ENCODE measurements at regions of chr10 and their contacts with region 1.

Region 1: GRCh38 chr10:44010873-44011602 is 362.4 kb upstream of the ZNF32 start:
- DNase-seq: no peak
- H3K4me3 ChIP-seq: no peak overlapping the region
- H3K4me3 Mint-ChIP-seq: no peak overlapping the region
- H3K27ac Mint-ChIP-seq: no peak overlapping the region
- H3K4me1 ChIP-seq: no peaks in the 10 kb centered on the region
- H3K4me1 Mint-ChIP-seq: peaks cover 6% of the 10 kb centered on the region
- H3K27me3 ChIP-seq: no peaks in the 10 kb centered on the region; the same call in 1 of the 2 replicates
- H3K27me3 Mint-ChIP-seq: peaks cover 18% of the 10 kb centered on the region
- CTCF ChIP-seq: no peak

Region 2: GRCh38 chr10:43846187-43846680 is 164.8 kb before region 1 on chr10:
- CTCF ChIA-PET with region 1: no interaction called
- POLR2A ChIA-PET with region 1: no interaction called
- intact Hi-C with region 1: loop called (anchors 10 kb)
- DNase-seq: no peak
- H3K4me3 ChIP-seq: no peak overlapping the region
- H3K4me3 Mint-ChIP-seq: no peak overlapping the region
- H3K27ac Mint-ChIP-seq: no peak overlapping the region
- H3K4me1 ChIP-seq: no peaks in the 10 kb centered on the region
- H3K4me1 Mint-ChIP-seq: peaks cover 6% of the 10 kb centered on the region
- H3K27me3 ChIP-seq: no peaks in the 10 kb centered on the region
- H3K27me3 Mint-ChIP-seq: peaks cover 17% of the 10 kb centered on the region
- CTCF ChIP-seq: peak in 1 of 2 experiments; percentile 0

Region 3: DNA sequence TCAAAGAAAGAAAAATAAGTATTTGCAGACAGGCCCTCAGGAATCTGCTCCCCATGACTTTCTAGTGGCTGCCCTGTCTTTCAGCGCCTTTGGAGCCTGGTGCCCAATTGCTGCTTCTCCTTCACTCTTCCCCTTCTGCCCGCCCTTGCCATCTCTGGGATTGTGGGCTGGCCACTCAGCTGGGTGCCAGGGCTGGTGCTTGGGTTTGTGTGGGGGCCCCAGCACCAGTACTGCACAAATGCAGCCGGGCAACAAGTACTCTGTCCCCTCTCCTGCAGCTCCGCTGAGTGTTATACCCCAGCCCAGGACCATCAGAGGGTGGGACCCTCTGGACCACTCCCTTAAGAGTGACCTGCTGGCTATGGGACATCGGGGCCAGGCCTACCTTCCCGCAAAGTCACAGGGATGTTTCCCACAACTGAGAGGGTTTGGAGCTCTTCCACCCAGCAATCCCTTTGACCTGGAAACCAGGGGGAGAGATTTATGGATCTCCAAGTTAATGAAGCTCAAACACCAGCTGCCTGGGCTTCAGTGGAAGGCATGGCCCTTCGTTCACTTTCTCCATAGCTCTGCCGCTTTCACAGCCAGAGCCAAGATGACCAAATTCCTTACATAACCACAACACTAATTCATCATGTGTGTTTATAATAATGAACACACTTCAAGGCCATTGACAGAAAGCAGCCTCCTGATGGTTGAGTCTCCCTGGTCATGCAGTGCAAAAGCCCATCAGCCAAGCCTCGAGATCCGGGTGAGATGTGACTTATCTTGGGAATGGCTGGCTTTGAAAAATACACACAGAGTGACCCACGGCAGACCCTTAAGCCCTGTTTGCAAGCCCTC is 48.5 kb before region 1 on chr10:
- CTCF ChIA-PET with region 1: no interaction called
- POLR2A ChIA-PET with region 1: no interaction called
- intact Hi-C with region 1: no loop called
- DNase-seq: peak in 1 of 2 experiments; percentile 24
- H3K4me3 ChIP-seq: no peak overlapping the region
- H3K4me3 Mint-ChIP-seq: no peak overlapping the region
- H3K27ac Mint-ChIP-seq: no peak overlapping the region
- H3K4me1 ChIP-seq: no peaks in the 10 kb centered on the region
- H3K4me1 Mint-ChIP-seq: no peaks in the 10 kb centered on the region
- H3K27me3 ChIP-seq: no peaks in the 10 kb centered on the region
- H3K27me3 Mint-ChIP-seq: peaks cover 15% of the 10 kb centered on the region
- CTCF ChIP-seq: no peak

Measured in Caco-2 (cell line).